ENCODE measurements at regions of chr11 and their contacts with region 1.

Region 1: GRCh38 chr11:7353100-7353499 is 101.4 kb downstream of the SYT9 start:
- DNase-seq: peak; percentile 24
- H3K4me3 ChIP-seq: no peak overlapping the region
- H3K27ac ChIP-seq: no peak overlapping the region
- H3K4me1 ChIP-seq: no peaks in the 10 kb centered on the region
- H3K27me3 ChIP-seq: peaks cover 0 to 5% of the 10 kb centered on the region in 2 experiments
- CTCF ChIP-seq: peak; percentile 21 to 37
- POLR2A ChIP-seq: no peak

Region 2: DNA sequence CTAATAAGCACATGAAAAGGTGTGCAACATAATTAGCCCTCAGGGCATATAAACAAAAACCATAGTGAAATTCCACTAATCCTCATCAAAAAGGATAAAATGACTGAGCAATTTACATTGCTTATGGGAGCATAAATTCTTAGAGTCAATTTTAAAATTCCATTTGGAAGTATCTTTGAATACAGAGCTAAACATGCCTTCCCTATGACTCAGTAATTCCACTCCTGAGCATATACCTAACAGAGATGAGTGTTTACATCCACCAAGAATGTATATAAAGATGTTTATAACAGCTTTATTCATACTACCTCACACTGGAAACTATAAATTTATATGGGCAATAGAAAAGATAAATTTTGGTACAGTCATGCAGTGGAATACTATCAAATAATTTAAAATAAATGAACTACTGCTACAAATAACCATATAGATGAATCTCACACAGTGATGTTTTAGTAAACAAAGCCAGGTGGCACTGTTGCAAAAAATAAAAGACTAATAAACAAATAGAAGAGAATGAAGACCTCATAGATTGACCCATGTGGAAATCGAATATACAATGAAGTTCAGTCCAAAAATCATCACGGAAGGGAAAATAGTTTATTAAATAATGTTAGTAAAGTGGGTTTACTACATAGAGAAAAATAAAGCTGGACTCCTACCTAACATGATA is 452.6 kb before region 1 on chr11:
- CTCF ChIA-PET with region 1: no interaction called
- POLR2A ChIA-PET with region 1: no interaction called
- dilution Hi-C with region 1: no loop called
- intact Hi-C with region 1: no loop called
- DNase-seq: no peak
- H3K4me3 ChIP-seq: no peak overlapping the region
- H3K27ac ChIP-seq: no peak overlapping the region
- H3K4me1 ChIP-seq: no peaks in the 10 kb centered on the region
- H3K27me3 ChIP-seq: no peaks in the 10 kb centered on the region
- CTCF ChIP-seq: no peak
- POLR2A ChIP-seq: no peak

Region 3: GRCh38 chr11:7098235-7098832 is 254.8 kb before region 1 on chr11:
- CTCF ChIA-PET with region 1: interaction called, 3 read pairs
- POLR2A ChIA-PET with region 1: no interaction called
- dilution Hi-C with region 1: no loop called
- intact Hi-C with region 1: loop called (anchors 2 kb)
- DNase-seq: peak; percentile 67
- H3K4me3 ChIP-seq: no peak overlapping the region
- H3K27ac ChIP-seq: no peak overlapping the region
- H3K4me1 ChIP-seq: no peaks in the 10 kb centered on the region
- H3K27me3 ChIP-seq: peaks cover 0 to 11% of the 10 kb centered on the region in 2 experiments
- CTCF ChIP-seq: peak; percentile 37 to 51
- POLR2A ChIP-seq: no peak

Region 4: GRCh38 chr11:7413961-7414915 is 61.1 kb after region 1 on chr11:
- CTCF ChIA-PET with region 1: no interaction called
- POLR2A ChIA-PET with region 1: no interaction called
- dilution Hi-C with region 1: no loop called
- intact Hi-C with region 1: no loop called
- DNase-seq: no peak
- H3K4me3 ChIP-seq: no peak overlapping the region
- H3K27ac ChIP-seq: no peak overlapping the region
- H3K4me1 ChIP-seq: peaks cover 7% of the 10 kb centered on the region
- H3K27me3 ChIP-seq: no peaks in the 10 kb centered on the region
- CTCF ChIP-seq: no peak
- POLR2A ChIP-seq: no peak

Region 5: DNA sequence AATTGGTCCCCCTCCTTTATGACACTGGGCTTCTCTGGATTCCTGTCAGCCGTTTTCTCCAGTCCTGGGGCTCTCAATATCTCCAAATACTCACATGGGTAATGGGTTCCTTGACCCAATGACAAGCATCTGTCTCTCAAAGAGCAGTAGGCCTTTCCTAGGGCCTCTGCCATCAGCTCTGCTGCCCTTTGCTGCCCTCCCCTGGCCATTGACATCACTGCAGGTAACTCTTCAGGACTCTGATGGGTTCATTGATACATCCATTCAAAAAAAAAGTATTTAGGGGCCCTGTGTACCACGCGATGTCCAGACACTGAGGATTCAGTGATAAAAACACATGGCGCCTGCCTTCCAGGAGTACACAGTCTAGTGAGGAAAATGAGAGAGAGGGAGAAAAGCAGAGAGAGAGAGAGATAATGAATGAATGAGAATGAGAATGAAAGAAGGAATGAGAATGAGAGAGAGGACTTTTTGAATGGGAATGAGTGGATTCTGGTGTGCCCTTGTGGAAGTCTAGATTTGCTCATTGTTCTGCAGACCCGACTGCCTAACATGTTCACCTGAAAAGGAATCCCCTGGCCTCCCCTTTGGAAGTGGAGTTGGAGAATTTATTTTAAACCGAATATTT is 89.6 kb after region 1 on chr11:
- CTCF ChIA-PET with region 1: interaction called, 43 read pairs
- POLR2A ChIA-PET with region 1: no interaction called
- dilution Hi-C with region 1: no loop called
- intact Hi-C with region 1: loop called (anchors 1 kb)
- DNase-seq: peak; percentile 63
- H3K4me3 ChIP-seq: no peak overlapping the region
- H3K27ac ChIP-seq: no peak overlapping the region
- H3K4me1 ChIP-seq: no peaks in the 10 kb centered on the region
- H3K27me3 ChIP-seq: peaks cover 2 to 11% of the 10 kb centered on the region in 2 experiments
- CTCF ChIP-seq: peak; percentile 78 to 80
- POLR2A ChIP-seq: no peak

Region 6: DNA sequence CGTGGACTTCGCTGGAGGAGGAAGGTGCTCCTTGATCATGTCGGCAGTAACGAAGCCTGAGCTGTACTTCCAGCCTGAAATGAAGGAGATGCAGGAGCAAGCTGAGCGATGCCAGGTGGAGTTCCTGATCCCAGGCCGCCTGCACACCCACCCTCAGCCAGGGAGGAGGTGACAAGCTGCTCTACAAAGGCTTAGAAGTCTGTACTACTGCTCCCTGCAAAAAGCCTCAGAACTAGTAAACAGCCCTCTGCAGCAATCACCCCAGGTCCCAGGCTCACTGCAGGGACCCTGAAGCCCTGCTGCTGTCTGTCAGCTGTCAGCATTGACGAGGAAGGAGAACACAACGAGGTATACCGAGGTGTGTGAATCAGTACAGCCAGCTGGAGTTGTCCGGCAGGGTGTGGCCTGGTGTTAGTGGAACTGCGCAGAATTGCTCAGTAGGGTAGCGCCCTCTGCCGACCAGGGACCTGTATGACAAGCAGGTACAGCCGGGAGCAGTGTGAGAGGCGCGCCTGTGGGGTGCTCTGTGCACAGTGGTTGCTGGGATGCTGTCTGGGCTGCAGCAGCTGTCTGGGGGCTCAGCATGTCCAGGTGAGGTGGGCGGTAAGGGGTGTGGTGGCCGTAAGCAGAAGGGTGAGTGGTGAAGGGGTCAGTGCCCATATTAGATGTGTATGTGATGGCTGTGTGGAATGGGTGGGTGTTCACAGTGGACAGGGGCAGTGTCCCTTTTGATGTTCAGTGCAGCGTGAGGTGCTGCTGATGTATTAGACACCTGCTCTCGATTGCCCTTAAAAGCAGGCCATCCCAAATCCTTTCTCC is 312.6 kb after region 1 on chr11:
- CTCF ChIA-PET with region 1: interaction called, 14 read pairs
- POLR2A ChIA-PET with region 1: no interaction called
- dilution Hi-C with region 1: no loop called
- intact Hi-C with region 1: loop called (anchors 1 kb)
- DNase-seq: peak; percentile 69
- H3K4me3 ChIP-seq: no peak overlapping the region
- H3K27ac ChIP-seq: no peak overlapping the region
- H3K4me1 ChIP-seq: no peaks in the 10 kb centered on the region
- H3K27me3 ChIP-seq: no peaks in the 10 kb centered on the region
- CTCF ChIP-seq: peak; percentile 79 to 94
- POLR2A ChIP-seq: no peak

Region 7: GRCh38 chr11:7688238-7688826 is 335.2 kb after region 1 on chr11:
- CTCF ChIA-PET with region 1: interaction called, 7 read pairs
- POLR2A ChIA-PET with region 1: no interaction called
- dilution Hi-C with region 1: no loop called
- intact Hi-C with region 1: loop called (anchors 1 kb)
- DNase-seq: peak; percentile 36
- H3K4me3 ChIP-seq: no peak overlapping the region
- H3K27ac ChIP-seq: no peak overlapping the region
- H3K4me1 ChIP-seq: no peaks in the 10 kb centered on the region
- H3K27me3 ChIP-seq: peaks cover 46 to 50% of the 10 kb centered on the region in 2 experiments
- CTCF ChIP-seq: peak; percentile 72 to 77
- POLR2A ChIP-seq: no peak

Region 8: DNA sequence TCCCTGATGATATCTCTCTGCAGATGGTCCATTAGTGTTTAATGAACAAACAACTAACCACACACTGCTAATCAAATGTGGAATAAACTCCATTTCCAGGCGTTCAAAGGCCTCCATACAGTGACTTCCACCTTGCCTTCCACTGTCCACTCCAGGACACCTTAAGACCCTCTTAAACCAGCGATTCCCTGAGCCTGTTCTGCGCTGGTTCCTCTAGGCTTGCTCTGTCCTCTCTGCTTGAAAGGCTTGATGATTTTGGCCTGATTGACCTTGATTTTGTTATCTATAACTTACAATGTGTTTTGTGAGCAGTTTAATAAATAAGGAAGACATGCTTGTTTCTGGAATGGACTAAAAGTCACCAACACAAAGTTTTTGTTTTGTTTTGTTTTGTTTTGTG is 341.1 kb after region 1 on chr11:
- CTCF ChIA-PET with region 1: interaction called, 7 read pairs
- POLR2A ChIA-PET with region 1: no interaction called
- dilution Hi-C with region 1: no loop called
- intact Hi-C with region 1: loop called (anchors 1 kb)
- DNase-seq: no peak
- H3K4me3 ChIP-seq: no peak overlapping the region
- H3K27ac ChIP-seq: no peak overlapping the region
- H3K4me1 ChIP-seq: no peaks in the 10 kb centered on the region
- H3K27me3 ChIP-seq: peaks cover 37 to 40% of the 10 kb centered on the region in 2 experiments
- CTCF ChIP-seq: no peak
- POLR2A ChIP-seq: no peak

Region 9: DNA sequence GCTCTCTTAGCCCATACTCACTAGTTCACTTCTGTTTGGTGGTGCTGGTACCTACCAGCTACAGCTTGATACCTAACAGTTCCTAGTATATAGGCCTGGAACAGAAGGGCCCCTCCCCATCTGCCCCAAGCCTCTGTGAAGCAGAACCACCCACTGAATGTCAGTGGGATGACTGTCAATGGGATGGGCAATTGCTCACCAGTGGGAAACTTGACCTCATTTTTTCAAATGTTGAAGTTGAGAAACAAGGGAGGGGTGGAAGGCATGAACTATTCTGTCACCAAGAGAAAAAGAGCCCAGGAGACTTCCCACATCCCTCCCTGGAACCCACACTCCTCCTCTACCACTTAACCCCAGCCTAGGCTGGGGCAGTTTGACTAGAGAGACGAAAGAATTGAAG is 612.3 kb after region 1 on chr11 and contains the start of gene NLRP10:
- CTCF ChIA-PET with region 1: no interaction called
- POLR2A ChIA-PET with region 1: no interaction called
- dilution Hi-C with region 1: no loop called
- intact Hi-C with region 1: loop called (anchors 5 kb)
- DNase-seq: no peak
- H3K4me3 ChIP-seq: no peak within 1 kb of the TSS
- H3K27ac ChIP-seq: no peak within 1 kb of the TSS
- H3K4me1 ChIP-seq: no peaks in the 10 kb centered on the region
- H3K27me3 ChIP-seq: peaks cover 0 to 2% of the 10 kb centered on the region in 2 experiments
- CTCF ChIP-seq: no peak
- POLR2A ChIP-seq: no peak
- total RNA-seq, gene NLRP10: not detected in 2 replicates